Activated T-helper 1 cell treated with anti-CD3 and anti-CD28 coated beads, Interleukin-12 subunit alpha, Interleukin-12 subunit beta, Interleukin-2, Interleukin-4 antibody, amounts not matched to agents 30 ng/mL and 10 ng/mL and 1 ng/mL, durations not matched to agents 14 hours and 24 hours and 36 hours (primary cell): ENCODE measurements at regions of chr16 and their contacts with region 1.

Region 1: GRCh38 chr16:69424053-69424934 is at the start of gene CYB5B:
- DNase-seq: peak; percentile 91
- H3K4me3 Mint-ChIP-seq: peak within 1 kb of the TSS; percentile 92
- H3K27ac Mint-ChIP-seq: peak within 1 kb of the TSS; percentile 90
- H3K4me1 Mint-ChIP-seq: peaks cover 25% of the 10 kb centered on the region
- H3K27me3 Mint-ChIP-seq: no peaks in the 10 kb centered on the region
- total RNA-seq, gene CYB5B: 157 and 166 TPM in 2 replicates

Region 2: GRCh38 chr16:68013440-68013839 is 1410.9 kb before region 1 on chr16:
- intact Hi-C with region 1: no loop called
- DNase-seq: no peak
- H3K4me3 Mint-ChIP-seq: no peak overlapping the region
- H3K27ac Mint-ChIP-seq: no peak overlapping the region
- H3K4me1 Mint-ChIP-seq: peaks cover 4% of the 10 kb centered on the region
- H3K27me3 Mint-ChIP-seq: no peaks in the 10 kb centered on the region

Region 3: DNA sequence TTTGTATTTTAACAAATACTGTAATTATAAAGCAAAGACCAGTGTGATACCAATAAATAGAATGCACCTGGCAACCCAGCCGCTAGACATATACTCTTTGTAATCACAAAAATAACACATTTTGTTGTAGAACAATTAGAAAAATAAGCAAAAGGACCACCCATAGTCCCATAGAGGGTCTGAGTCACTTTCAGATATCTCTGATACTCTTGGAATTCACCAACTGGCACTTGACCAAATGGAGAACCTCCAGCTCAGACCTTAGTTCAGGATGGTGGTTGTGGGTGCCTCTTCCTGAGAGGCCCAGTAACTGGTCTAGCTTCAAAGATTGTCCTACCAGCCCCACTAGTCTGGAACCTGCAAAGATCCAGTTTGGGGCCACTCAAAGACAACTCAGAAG is 37.7 kb before region 1 on chr16:
- intact Hi-C with region 1: loop called (anchors 1 kb)
- DNase-seq: no peak
- H3K4me3 Mint-ChIP-seq: peak overlapping the region; percentile 92
- H3K27ac Mint-ChIP-seq: no peak overlapping the region
- H3K4me1 Mint-ChIP-seq: peaks cover 26% of the 10 kb centered on the region
- H3K27me3 Mint-ChIP-seq: no peaks in the 10 kb centered on the region

Region 4: DNA sequence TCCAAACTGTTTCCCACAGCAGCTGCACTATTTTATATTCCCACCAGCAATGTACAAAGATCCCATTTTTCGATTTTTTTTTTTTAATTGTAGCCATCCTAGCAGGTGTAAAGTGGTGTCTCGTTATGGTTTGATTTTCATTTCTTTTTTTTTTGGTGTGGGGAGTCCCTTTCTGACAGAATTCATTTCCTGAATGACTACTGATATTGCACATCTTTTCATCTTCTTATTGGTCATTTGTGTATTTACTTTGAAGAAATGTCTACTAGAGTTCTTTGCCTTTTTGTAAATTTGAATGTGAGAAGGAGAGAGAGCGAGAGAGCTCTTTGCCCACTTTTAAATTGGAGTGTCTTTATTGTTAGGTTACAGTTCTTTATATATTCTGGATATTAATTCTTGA is 14.2 kb after region 1 on chr16:
- intact Hi-C with region 1: loop called (anchors 1 kb)
- DNase-seq: no peak
- H3K4me3 Mint-ChIP-seq: no peak overlapping the region
- H3K27ac Mint-ChIP-seq: peak overlapping the region; percentile 63
- H3K4me1 Mint-ChIP-seq: peaks cover 68% of the 10 kb centered on the region
- H3K27me3 Mint-ChIP-seq: no peaks in the 10 kb centered on the region

Region 5: GRCh38 chr16:69465083-69465721 is 40.9 kb after region 1 on chr16:
- intact Hi-C with region 1: loop called (anchors 2 kb)
- DNase-seq: peak; percentile 18
- H3K4me3 Mint-ChIP-seq: peak overlapping the region; percentile 45
- H3K27ac Mint-ChIP-seq: peak overlapping the region; percentile 75
- H3K4me1 Mint-ChIP-seq: peaks cover 55% of the 10 kb centered on the region
- H3K27me3 Mint-ChIP-seq: no peaks in the 10 kb centered on the region